ENCODE measurements at regions of chr17 and their contacts with region 1.

Region 1: DNA sequence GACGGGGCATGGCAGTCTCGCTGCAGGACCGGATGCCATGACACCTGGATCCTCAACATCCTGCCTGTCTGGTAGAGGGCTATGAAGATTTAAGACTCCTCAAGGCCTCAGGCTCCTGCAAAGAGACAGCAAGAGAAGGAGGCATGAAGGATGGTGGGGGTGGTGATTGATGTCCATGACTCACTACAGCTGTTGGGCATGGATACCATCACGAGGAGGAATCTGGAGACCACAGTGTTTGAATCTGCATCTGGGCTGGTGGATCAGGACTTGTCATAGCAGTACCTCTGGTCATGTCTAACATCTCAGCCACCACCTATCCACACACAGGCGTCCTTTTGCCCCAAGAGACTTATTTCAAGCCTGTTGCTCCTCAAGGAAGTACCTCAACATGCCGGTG is 50.2 kb upstream of the WSCD1 start:
- DNase-seq: no peak
- H3K4me3 ChIP-seq: no peak overlapping the region
- H3K27ac ChIP-seq: no peak overlapping the region
- H3K4me1 ChIP-seq: no peaks in the 10 kb centered on the region
- H3K27me3 ChIP-seq: peaks cover 4% of the 10 kb centered on the region
- CTCF ChIP-seq: no peak

Region 2: DNA sequence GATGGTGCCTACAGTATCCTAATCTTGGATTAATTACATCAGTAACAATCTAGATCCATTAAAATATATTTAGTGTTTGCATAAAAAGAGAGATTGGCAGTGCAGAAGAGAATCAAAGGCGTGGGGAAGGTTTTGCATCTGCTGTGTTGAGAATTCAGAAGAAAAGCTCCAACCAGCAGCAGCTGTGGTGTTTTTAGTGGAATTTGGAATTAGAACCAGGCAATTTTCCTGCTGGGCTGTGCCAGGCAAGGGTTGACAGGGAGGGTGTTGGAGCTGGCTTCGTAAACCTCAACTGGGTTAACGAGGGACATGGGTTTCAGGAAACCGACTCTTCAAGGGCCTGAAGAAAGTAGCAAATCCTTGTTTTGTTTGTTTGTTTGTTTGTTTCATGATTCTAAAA is 57.6 kb before region 1 on chr17:
- intact Hi-C with region 1: loop called (anchors 10 kb)
- DNase-seq: no peak
- H3K4me3 ChIP-seq: no peak overlapping the region
- H3K27ac ChIP-seq: no peak overlapping the region
- H3K4me1 ChIP-seq: no peaks in the 10 kb centered on the region
- H3K27me3 ChIP-seq: no peaks in the 10 kb centered on the region
- CTCF ChIP-seq: no peak